ENCODE measurements at regions of chr2 and their contacts with region 1.

Region 1: GRCh38 chr2:160516547-160517365 is 23.1 kb upstream of the RBMS1 start:
- DNase-seq: no peak
- H3K4me3 ChIP-seq: no peak overlapping the region
- H3K27me3 ChIP-seq: no peaks in the 10 kb centered on the region
- CTCF ChIP-seq: no peak

Region 2: DNA sequence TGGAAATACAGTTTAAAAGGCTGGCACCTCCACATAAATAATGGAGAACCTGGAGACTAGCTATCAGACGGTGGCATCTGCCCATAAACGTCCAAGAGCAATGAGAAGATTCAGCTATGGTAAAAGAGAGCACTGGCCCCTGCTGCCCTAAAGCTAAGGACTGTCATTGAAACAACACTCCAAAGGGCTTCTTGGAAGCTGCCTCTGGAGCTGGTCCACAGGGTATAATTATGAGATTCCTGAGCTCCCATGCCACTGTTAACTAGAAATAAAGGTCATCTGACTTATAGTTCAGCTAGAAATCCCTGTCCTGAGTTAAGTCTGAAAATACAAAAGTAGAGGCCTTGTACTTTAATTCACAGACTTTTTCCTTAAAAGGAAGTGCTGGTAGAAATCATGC is 16.7 kb after region 1 on chr2:
- CTCF ChIA-PET with region 1: interaction called, 4 read pairs
- POLR2A ChIA-PET with region 1: interaction called, 10 read pairs
- DNase-seq: no peak
- H3K4me3 ChIP-seq: no peak overlapping the region
- H3K27me3 ChIP-seq: no peaks in the 10 kb centered on the region
- CTCF ChIP-seq: no peak

Region 3: GRCh38 chr2:160813506-160813858 is 296.7 kb after region 1 on chr2:
- CTCF ChIA-PET with region 1: no interaction called
- POLR2A ChIA-PET with region 1: no interaction called
- DNase-seq: no peak
- H3K4me3 ChIP-seq: no peak overlapping the region
- H3K27me3 ChIP-seq: no peaks in the 10 kb centered on the region
- CTCF ChIP-seq: no peak

Measured in BJ (cell line).